ENCODE measurements at regions of chr17 and their contacts with region 1.

Region 1: DNA sequence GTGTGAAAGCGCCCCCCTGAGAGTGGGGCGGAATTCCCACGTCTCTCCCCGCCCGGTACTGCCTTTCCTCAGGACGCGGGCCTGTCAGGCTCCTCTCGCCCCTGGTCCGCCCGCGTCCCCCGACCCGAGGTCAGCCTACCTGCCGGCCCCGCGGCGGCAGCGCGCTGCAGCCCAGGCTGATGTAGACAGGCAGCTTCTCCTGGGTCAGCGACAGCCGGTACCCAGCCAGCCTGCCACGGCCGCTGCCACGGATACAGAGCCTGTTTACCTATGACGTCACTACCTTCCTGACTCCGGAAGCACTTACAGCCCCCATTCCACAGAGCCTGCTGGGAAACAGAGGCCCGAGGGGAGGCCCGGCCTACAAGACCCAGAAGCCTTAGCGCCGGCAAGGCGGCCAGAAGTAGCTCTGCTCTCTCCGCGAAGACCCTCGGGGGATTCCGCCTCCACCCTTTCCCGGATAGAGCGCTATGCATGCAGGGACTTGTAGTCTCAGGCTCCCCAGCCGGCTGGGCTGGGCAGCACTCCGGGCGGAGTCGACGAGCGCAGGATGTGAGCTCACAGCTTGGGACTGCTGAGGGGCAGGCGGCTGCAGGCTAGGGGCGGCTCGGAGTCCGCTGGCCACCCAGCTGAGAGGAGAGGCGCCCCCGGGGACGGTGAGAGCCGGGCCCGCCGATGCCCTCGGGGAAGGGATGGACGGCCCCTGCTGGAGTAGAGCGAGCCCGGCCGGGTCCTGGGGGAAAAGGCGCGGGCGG is at the starts of genes IFT20 and TNFAIP1:
- DNase-seq: peak; percentile 99
- H3K4me3 Mint-ChIP-seq: peak within 1 kb of the TSS; percentile 96
- H3K27ac Mint-ChIP-seq: peak within 1 kb of the TSS; percentile 97
- H3K4me1 Mint-ChIP-seq: peaks cover 41% of the 10 kb centered on the region
- H3K27me3 Mint-ChIP-seq: no peaks in the 10 kb centered on the region
- CTCF ChIP-seq: no peak
- total RNA-seq, gene IFT20: 29.3 and 38.3 TPM in 2 replicates
- total RNA-seq, gene TNFAIP1: 61.7 and 65.0 TPM in 2 replicates

Region 2: DNA sequence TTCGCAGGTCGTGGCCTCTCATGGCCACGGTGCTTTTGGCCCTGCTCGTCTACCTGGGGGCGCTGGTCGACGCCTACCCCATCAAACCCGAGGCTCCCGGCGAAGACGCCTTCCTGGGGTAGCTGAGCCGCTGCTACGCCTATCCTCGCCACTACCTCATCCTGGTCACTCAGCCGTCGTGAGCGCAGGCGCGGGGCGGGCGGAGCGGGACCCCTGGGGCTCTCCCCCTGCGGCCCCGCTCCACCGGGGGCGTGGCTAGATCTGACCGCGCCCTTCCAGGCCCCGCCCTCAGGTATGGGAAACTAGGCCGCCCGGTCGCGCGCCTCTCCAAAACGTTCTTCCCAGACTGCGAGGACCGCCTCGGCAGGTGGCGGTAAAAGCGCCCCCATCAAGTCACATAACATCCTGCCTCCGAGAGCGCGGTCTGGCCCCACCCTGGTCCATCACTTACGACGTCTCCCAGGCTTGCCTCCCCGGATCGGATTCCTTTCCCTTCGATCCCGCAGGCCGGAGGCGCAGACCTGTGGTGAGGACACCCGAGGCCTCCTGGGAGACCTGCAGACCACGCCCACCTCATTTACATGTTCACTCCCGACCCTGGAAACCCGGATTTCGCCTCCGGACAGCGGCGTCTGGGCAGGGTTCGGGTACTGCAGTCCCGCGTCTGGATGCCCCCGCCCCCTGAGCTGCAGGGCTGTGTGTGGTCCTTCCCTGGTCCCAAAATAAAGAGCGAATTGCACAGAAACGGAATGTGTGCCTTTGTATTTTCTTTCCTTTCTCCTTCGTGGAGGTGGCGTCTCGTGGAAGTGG is 107.9 kb before region 1 on chr17:
- CTCF ChIA-PET with region 1: interaction called, 13 read pairs
- POLR2A ChIA-PET with region 1: interaction called, 28 read pairs
- intact Hi-C with region 1: loop called (anchors 5 kb)
- DNase-seq: peak; percentile 83
- H3K4me3 Mint-ChIP-seq: peak overlapping the region; percentile 88
- H3K27ac Mint-ChIP-seq: peak overlapping the region; percentile 94
- H3K4me1 Mint-ChIP-seq: peaks cover 5% of the 10 kb centered on the region
- H3K27me3 Mint-ChIP-seq: no peaks in the 10 kb centered on the region
- CTCF ChIP-seq: no peak

Region 3: DNA sequence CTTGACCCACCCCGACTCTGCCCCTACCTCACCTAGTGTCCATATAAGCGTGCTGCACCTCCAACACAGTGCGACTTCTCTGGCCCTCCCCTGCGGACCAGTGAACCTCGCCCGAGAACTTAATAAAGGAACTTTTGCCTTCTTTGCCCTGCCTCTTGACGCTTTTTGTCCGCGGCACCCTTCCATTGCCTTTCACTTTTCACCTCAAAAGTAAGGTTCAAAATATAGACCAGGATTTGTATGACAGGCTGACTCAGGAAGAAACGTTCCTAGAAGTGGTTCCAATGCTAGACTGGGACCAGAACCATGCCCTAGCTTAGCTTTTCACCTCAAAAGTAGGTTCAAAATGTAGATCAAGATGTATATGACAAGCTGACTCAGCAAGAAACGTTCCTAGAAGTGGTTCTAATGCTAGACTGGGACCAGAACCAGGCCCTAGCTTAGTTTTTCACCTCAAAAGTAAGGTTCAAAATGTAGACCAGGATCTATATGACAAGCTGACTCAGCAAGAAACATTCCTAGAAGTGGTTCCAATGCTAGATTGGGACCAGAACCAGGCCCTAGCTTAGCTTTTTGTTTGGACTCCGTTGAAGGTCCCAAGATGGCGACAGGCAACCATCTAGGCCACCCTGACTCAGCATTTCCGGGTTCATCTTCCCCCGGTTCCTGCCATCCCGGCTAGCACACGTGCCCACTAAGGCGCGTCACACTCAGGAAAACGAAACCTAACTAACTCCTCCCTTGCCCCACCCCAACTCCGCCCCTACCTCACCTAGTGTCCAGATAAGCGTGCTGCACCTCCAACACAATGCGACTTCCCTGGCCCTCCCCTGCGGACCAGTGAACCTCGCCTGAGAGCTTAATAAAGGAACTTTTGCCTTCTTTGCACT is 67.4 kb before region 1 on chr17:
- CTCF ChIA-PET with region 1: interaction called, 3 read pairs
- POLR2A ChIA-PET with region 1: interaction called, 10 read pairs
- intact Hi-C with region 1: no loop called
- DNase-seq: no peak
- H3K4me3 Mint-ChIP-seq: no peak overlapping the region
- H3K27ac Mint-ChIP-seq: no peak overlapping the region
- H3K4me1 Mint-ChIP-seq: no peaks in the 10 kb centered on the region
- H3K27me3 Mint-ChIP-seq: peaks cover 40% of the 10 kb centered on the region
- CTCF ChIP-seq: no peak

Region 4: DNA sequence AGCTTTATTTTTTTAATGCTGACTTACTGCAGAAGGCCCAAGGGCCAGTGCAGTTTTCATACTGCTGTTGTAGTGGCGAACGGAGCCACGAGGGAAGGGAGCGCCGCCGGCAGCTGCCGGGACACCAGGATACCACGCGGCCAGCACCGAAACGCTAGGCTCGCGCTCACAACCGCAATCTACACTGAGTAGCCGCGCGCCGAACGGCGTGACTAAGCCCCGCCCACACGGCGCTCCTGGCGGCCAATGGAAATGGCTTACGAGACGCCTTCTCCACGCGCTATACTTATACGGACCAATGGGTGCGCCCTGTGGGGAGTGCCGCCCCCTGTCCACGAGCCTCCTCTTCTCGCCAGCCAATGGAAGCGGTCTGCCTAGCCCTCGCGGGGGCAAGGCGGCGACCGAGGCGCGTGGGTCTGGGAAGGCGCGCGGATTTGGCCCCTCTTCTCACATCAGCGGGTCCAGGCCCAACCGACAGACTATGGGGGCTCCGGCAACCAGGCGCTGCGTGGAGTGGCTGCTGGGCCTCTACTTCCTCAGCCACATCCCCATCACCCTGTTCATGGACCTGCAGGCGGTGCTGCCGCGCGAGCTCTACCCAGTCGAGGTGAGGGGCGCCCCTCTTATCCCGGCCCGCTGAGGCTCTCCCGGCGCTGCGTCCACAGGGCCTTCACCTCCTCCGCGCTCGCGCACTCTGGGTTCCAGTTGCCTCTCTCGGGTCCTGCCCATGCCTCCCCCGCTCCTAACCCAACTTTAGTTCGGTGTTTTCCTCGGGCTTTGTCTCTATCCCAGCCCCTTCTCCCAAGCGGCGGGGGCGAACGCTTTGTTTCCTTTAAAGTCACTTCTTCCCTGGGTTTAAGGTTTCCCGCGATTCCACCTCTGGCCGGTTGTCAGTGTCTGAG is 16.4 kb before region 1 on chr17 and contains the start of gene TMEM97:
- CTCF ChIA-PET with region 1: interaction called, 7 read pairs
- POLR2A ChIA-PET with region 1: interaction called, 50 read pairs
- intact Hi-C with region 1: no loop called
- DNase-seq: peak; percentile 98
- H3K4me3 Mint-ChIP-seq: peak within 1 kb of the TSS; percentile 99
- H3K27ac Mint-ChIP-seq: peak within 1 kb of the TSS; percentile 82
- H3K4me1 Mint-ChIP-seq: peaks cover 38% of the 10 kb centered on the region
- H3K27me3 Mint-ChIP-seq: no peaks in the 10 kb centered on the region
- CTCF ChIP-seq: peak; percentile 6
- total RNA-seq, gene TMEM97: 8.6 and 12.1 TPM in 2 replicates

Region 5: DNA sequence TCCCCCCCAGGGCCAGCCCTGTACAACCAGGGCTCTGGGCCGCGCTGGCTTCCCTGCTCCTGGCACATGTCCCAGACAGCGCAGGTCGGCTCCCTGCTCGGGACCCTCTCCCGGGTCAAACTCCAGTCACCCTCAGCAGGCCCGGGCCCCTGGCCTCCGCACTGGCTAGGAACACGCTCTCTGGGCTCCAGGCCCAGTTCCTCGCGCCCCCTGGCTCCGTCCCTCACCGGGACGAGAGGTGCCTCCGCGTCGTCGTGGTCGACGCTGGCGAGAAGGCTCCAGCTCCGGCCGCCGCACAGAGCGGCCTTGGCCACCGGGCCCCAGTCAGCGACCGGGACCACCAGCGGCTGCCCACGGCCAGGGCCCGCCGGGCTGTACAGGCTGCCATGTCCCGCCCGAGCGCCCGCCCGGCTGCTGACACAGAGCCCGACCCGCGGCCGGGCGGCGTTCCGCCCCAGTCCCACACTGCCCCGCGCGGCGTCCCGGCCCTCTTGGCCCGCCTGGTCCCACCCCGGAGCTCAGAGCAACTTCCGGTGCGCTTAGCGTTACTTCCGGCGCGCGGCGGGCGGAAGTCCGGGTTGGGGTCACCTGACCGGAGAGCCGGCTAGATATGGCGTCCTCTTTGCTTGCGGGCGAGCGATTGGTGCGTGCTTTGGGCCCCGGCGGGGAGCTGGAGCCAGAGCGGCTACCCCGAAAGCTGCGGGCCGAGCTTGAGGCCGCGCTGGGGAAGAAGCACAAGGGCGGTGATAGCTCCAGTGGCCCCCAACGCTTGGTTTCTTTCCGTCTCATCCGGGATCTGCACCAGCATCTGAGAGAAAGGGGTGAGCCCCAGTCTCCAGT is 21.9 kb after region 1 on chr17 and contains the start of gene POLDIP2:
- CTCF ChIA-PET with region 1: interaction called, 9 read pairs
- POLR2A ChIA-PET with region 1: interaction called, 107 read pairs
- intact Hi-C with region 1: no loop called
- DNase-seq: peak; percentile 92
- H3K4me3 Mint-ChIP-seq: peak within 1 kb of the TSS; percentile 88
- H3K27ac Mint-ChIP-seq: peak within 1 kb of the TSS; percentile 84
- H3K4me1 Mint-ChIP-seq: peaks cover 13% of the 10 kb centered on the region
- H3K27me3 Mint-ChIP-seq: no peaks in the 10 kb centered on the region
- CTCF ChIP-seq: no peak
- total RNA-seq, gene POLDIP2: 84.0 and 105 TPM in 2 replicates

Region 6: GRCh38 chr17:28405632-28406472 is 70.5 kb after region 1 on chr17 and contains the start of gene SLC46A1:
- CTCF ChIA-PET with region 1: interaction called, 5 read pairs
- POLR2A ChIA-PET with region 1: interaction called, 43 read pairs
- intact Hi-C with region 1: no loop called
- DNase-seq: peak; percentile 44
- H3K4me3 Mint-ChIP-seq: peak within 1 kb of the TSS; percentile 86
- H3K27ac Mint-ChIP-seq: no peak within 1 kb of the TSS
- H3K4me1 Mint-ChIP-seq: peaks cover 23% of the 10 kb centered on the region
- H3K27me3 Mint-ChIP-seq: no peaks in the 10 kb centered on the region
- CTCF ChIP-seq: no peak
- total RNA-seq, gene SLC46A1: 18.4 and 20.1 TPM in 2 replicates

Region 7: GRCh38 chr17:28494445-28495188 is 159.2 kb after region 1 on chr17:
- CTCF ChIA-PET with region 1: interaction called, 4 read pairs
- POLR2A ChIA-PET with region 1: interaction called, 11 read pairs
- intact Hi-C with region 1: loop called (anchors 5 kb)
- DNase-seq: peak; percentile 71
- H3K4me3 Mint-ChIP-seq: no peak overlapping the region
- H3K27ac Mint-ChIP-seq: no peak overlapping the region
- H3K4me1 Mint-ChIP-seq: peaks cover 8% of the 10 kb centered on the region
- H3K27me3 Mint-ChIP-seq: no peaks in the 10 kb centered on the region
- CTCF ChIP-seq: peak; percentile 88